ENCODE measurements at regions of chr2 and their contacts with region 1.

Region 1: GRCh38 chr2:239780236-239780994 is 244.7 kb downstream of the NDUFA10 start:
- DNase-seq: peak in 1 of 2 donors; percentile 47
- H3K4me3 ChIP-seq: no peak overlapping the region
- H3K27ac ChIP-seq: no peak overlapping the region
- H3K4me1 ChIP-seq: no peaks in the 10 kb centered on the region
- H3K27me3 ChIP-seq: peaks cover 0 to 11% of the 10 kb centered on the region in 2 donors
- CTCF ChIP-seq: no peak
- POLR2A ChIP-seq: no peak

Region 2: GRCh38 chr2:240170356-240171282 is 390.2 kb after region 1 on chr2:
- intact Hi-C with region 1: loop called (anchors 10 kb)
- DNase-seq: no peak
- H3K4me3 ChIP-seq: no peak overlapping the region
- H3K27ac ChIP-seq: no peak overlapping the region
- H3K4me1 ChIP-seq: no peaks in the 10 kb centered on the region
- H3K27me3 ChIP-seq: peaks cover 0 to 2% of the 10 kb centered on the region in 2 donors
- CTCF ChIP-seq: no peak
- POLR2A ChIP-seq: no peak